ENCODE measurements at regions of chr18 and their contacts with region 1.

Region 1: DNA sequence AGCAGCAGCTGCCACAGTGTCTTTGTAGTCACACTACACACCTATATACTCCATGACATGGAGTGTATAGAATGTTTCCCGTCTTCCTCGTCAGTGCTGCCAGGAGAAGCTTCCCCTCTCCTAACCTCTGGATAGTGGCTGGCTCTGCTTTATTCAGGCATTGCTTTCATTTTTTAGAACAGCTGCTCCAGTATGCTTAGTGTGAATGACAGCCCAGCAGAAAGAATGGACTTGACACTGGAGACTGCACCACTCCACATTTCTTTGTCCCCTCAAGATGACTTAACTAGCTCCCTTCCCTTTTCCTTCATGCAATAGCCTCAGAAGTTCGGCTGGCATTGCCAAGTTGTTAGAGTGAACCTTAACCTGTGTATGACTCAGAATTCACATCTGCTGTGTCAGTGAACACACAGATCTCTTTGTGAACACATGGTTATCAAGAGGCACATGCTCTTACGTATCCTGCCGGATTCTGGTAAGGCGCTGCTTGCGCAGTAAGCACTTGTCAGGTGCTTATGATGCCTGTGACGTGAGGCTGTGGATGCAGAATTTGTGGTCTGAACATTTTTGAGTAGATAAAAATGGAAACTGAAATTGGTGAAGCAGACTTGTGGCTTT is 73.9 kb downstream of the NEDD4L start:
- DNase-seq: no peak
- CTCF ChIP-seq: no peak

Region 2: DNA sequence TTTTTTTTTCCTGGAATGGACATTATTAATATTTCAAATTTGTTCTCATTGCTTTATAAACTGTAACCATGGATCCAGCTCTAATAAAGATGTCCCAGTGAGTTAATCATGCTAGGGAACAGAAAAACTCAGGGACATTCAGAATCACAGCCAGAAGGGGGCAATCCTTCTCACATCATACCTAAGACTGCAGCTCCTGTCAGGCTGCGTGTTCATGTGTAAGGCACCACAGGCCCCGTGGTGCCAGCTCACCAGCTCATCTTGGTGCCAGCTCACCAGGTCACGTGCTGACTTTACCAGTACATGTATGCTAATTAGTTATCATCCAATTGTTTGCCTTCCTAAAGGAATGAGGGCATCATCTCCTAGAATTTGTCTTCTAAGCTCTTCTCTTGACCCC is 158.6 kb before region 1 on chr18:
- CTCF ChIA-PET with region 1: interaction called, 25 read pairs
- POLR2A ChIA-PET with region 1: no interaction called
- DNase-seq: peak; percentile 48
- CTCF ChIP-seq: peak; percentile 34

Region 3: DNA sequence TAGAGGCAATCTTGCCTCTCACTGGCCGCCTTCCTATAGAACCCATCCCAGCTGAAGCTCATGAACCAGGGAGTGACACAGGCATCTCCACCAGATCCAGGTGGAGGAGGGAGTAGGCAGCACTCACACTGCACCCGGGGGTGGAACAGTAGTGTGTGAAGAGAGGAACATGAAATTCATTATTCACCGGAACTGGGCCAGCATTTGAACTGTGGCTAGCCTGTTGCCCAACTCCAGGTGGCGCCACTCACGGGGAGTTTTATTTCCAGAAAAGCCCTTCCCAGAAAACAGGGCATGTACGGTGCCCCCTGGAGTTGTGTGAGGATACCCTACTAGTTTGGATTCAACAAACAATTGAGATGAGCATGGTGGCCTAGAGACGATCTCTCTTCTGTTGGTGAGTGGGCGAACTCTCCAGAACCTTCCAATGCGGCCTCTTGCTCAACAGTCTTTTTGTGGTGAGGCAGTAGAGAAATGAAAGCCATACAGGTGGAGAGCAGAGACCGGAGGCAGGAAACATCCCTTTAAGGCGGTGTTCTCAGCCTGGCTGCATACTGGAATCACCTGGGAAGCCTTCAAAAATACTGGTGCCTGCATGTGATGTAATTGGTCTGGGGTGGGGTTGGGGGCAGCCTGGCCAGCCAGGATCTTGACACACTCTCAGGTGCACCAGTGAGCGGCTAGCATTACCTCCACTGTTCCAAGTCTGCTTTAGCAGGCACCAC is 147.4 kb before region 1 on chr18:
- CTCF ChIA-PET with region 1: no interaction called
- POLR2A ChIA-PET with region 1: no interaction called
- DNase-seq: no peak
- CTCF ChIP-seq: peak; percentile 23

Region 4: GRCh38 chr18:58043491-58044379 is 74.2 kb before region 1 on chr18 and contains the start of gene NEDD4L:
- CTCF ChIA-PET with region 1: interaction called, 30 read pairs
- POLR2A ChIA-PET with region 1: no interaction called
- DNase-seq: peak; percentile 87
- CTCF ChIP-seq: peak; percentile 73

Region 5: DNA sequence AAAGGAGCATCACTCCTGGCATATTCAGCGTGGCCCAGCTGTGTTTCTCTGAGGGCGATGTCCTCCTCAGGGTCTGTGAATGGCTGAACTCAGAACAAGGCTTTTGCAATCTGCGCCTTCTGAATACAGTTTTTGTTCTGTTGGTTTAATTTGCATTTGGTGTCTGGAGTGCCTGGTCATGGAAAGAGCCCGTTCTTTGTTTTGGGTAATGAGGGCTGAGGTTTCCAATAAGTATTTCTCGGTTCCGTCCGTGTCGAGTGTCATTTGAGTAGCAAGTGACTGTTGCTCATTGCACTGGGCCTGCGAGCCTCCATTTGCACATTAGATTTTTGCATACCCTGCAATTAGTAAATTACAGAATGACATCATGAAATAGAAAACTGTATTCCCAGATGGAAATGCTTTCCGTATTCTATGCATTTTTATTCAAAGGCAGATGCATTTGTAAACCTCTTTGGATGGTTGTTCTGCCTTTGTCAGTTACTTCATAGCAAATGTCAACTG is 16.6 kb before region 1 on chr18:
- CTCF ChIA-PET with region 1: interaction called, 13 read pairs
- POLR2A ChIA-PET with region 1: no interaction called
- DNase-seq: no peak
- CTCF ChIP-seq: no peak